ENCODE measurements at regions of chr7 and their contacts with region 1.

Region 1: GRCh38 chr7:73865738-73866445 is 4.9 kb downstream of the TMEM270 start:
- DNase-seq: no peak
- H3K4me3 ChIP-seq: no peak overlapping the region
- H3K27ac ChIP-seq: no peak overlapping the region
- H3K4me1 ChIP-seq: no peaks in the 10 kb centered on the region
- H3K27me3 ChIP-seq: no peaks in the 10 kb centered on the region
- CTCF ChIP-seq: peak; percentile 50 to 79

Region 2: DNA sequence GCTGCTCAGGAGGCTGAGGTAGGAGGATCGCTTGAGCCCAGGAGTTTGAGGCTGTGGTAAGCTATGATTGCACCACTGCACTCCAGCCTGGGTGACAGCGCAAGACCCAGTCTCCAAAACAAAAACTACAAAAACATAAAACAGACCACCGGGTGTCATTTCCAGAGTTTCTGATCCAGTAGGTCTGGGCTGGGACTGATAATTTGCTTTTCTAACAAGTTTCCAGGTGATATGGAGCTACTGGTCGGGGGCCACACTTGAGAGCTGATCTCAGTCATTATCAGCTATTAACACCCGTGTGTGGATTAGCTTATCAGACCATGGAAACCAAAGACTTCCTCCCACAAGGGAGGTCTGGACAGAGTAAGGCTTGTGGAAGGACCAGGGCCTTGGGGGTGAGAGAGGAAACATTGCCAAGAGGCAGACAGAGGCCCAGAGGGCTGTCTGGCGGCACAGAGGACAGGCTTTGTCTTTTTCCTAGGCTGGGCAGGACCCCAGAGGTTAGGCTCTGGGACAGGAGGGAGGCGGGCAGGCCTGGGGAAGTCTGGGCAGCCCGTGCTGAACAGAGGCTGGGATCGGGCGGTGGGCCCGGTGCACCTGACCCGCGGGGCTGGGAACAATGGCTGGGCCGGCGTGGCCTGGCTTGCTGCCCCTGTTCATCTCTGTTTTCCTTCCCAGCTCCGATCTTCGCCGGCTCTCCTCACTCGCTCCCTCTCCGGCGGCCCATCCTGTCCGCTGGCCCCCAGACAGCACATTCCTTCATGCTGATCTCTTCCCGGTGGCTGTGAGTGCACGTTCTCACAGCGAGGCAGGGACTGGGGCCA is 20.3 kb after region 1 on chr7:
- CTCF ChIA-PET with region 1: no interaction called
- dilution Hi-C with region 1: no loop called
- in situ Hi-C with region 1: no loop called
- intact Hi-C with region 1: no loop called
- DNase-seq: no peak
- H3K4me3 ChIP-seq: no peak overlapping the region
- H3K27ac ChIP-seq: no peak overlapping the region
- H3K4me1 ChIP-seq: no peaks in the 10 kb centered on the region
- H3K27me3 ChIP-seq: peaks cover 7% of the 10 kb centered on the region
- CTCF ChIP-seq: no peak

Region 3: DNA sequence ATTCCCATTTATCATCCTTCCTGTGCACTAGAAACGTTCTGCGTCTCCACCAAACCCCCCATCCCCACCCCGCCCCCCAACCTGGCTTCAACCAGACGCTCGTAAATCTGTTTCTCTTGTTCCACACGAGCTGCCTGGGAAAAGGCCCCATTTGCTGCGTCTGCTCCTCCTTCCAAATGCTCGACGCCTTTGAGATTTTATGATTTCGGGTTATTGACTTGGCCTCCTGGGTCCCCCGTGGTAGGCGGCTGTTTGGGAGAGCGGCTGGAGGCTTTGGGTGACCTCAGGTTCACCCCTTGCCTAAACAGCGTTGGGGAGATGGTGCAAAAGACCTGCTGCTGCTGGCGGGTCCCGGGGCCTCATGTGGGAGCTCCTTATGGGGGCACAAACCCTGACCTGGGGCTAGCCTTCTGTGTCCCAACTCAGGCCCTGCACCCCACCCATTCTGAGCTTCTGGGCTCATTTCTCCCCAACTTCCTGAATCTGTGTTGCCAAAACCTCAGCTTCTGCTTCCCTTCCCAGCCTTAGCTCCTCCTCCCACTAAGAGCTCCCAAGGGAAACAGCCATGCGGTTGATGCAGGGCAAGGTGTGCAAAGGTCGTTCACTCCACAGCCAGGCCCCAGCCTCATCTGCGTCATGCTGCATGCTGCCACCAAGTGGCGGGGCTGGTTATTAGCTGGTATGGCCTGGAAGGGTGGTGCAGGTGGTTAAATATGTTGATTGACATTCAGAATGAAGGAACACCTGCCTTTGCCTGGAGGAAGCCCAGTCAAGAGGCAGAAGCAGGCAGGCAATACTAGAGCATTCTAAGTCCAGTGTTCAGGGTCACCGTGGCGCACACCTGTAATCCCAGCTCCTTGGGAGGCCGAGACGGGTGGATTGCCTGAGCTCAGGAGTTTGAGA is 113.0 kb after region 1 on chr7:
- CTCF ChIA-PET with region 1: no interaction called
- dilution Hi-C with region 1: no loop called
- in situ Hi-C with region 1: no loop called
- intact Hi-C with region 1: loop called (anchors 1 kb)
- DNase-seq: peak; percentile 26
- H3K4me3 ChIP-seq: no peak overlapping the region
- H3K27ac ChIP-seq: no peak overlapping the region
- H3K4me1 ChIP-seq: no peaks in the 10 kb centered on the region
- H3K27me3 ChIP-seq: no peaks in the 10 kb centered on the region
- CTCF ChIP-seq: peak; percentile 48 to 63

Region 4: DNA sequence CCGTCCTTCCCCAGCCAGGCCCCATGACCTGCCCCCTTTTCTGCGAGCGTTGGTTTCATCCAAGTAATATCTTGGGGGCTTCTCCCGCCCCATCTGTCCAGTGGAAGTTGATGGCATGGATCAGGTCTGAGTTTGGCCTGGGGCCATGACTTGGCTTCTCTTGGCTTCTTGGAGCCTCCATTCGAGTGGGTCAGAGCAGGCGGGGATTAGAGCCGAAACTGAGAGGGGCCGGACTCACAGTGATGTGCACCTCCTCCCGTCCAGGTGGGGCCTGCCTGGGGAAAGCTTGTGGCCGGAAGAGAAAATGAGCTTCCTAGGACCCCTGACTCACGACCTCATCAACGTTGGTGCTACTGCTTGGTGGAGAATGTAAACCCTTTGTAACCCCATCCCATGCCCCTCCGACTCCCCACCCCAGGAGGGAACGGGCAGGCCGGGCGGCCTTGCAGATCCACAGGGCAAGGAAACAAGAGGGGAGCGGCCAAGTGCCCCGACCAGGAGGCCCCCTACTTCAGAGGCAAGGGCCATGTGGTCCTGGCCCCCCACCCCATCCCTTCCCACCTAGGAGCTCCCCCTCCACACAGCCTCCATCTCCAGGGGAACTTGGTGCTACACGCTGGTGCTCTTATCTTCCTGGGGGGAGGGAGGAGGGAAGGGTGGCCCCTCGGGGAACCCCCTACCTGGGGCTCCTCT is 202.6 kb after region 1 on chr7:
- CTCF ChIA-PET with region 1: no interaction called
- dilution Hi-C with region 1: no loop called
- in situ Hi-C with region 1: no loop called
- intact Hi-C with region 1: loop called (anchors 2 kb)
- DNase-seq: no peak
- H3K4me3 ChIP-seq: no peak overlapping the region
- H3K27ac ChIP-seq: no peak overlapping the region
- H3K4me1 ChIP-seq: no peaks in the 10 kb centered on the region
- H3K27me3 ChIP-seq: no peaks in the 10 kb centered on the region
- CTCF ChIP-seq: no peak

Region 5: DNA sequence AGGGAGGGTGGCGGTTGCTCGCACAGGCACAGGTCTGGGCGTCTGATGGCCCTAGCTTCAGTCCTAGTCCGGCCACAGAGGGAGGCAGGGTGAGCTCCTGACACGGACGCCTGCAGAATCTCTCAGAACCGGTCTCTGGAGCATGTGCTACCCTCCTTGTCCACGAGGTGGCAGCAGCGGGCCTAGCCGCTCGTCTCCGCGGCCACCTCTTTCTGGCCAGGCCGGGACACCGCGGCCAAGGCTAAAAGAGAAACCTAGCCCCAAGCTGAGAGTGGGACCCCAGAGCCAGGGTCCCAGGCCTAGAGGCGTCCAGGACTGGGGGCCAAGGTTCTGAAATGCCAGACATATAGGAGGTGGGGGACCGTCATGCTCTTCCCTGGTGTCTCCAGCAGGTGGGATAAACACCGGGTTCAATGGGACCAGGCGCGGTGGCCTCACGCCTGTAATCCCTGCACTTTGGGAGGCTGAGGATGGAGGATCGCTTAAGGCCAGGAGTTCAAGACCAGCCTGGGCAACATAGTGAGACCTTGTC is 340.8 kb after region 1 on chr7:
- CTCF ChIA-PET with region 1: no interaction called
- dilution Hi-C with region 1: no loop called
- in situ Hi-C with region 1: no loop called
- intact Hi-C with region 1: loop called (anchors 1 kb)
- DNase-seq: peak; percentile 52
- H3K4me3 ChIP-seq: peak overlapping the region in 1 of 3 experiments; percentile 20
- H3K27ac ChIP-seq: no peak overlapping the region
- H3K4me1 ChIP-seq: peaks cover 13% of the 10 kb centered on the region
- H3K27me3 ChIP-seq: no peaks in the 10 kb centered on the region
- CTCF ChIP-seq: peak; percentile 76 to 95

Region 6: DNA sequence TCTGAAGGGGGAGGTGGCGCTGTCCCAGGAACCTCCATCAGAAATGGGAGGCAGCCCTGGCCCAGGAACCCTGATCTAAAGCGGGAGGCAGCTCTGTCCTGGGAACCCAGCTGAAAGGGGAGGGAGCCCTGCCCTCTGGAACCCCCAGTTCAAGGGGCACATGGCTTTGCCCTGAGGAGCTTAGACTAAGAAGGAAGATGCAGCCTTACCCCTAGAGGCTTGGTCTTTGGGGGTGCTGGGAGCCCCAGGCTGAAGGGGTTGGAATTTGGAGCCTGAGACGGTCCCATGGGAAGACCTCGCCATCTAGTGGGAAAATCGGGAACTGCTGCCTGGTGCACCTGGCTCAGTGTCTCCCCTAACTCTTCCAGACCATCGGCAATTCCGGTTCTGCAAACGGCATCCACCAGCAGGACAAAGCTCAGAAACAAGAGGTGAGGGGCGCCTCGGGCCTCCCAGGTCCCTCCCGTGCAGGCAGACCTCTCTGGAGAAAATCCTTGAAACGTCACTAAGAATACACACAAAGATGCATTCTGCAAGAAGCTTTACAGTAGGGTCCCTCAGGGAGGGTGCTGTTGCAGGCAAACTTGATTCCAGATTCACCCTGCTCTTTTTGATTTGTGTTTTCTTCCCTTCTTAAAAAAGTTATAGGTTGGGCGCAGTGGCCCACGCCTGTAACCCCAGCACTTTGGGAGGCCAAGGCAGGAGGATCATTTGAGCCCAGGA is 535.4 kb after region 1 on chr7:
- CTCF ChIA-PET with region 1: no interaction called
- dilution Hi-C with region 1: no loop called
- in situ Hi-C with region 1: no loop called
- intact Hi-C with region 1: loop called (anchors 1 kb)
- DNase-seq: peak; percentile 42
- H3K4me3 ChIP-seq: no peak overlapping the region
- H3K27ac ChIP-seq: no peak overlapping the region
- H3K4me1 ChIP-seq: no peaks in the 10 kb centered on the region
- H3K27me3 ChIP-seq: no peaks in the 10 kb centered on the region
- CTCF ChIP-seq: peak; percentile 98

Measured in mammary epithelial cell (primary cell).